SK-N-SH (cell line): ENCODE measurements at regions of chr5 and their contacts with region 1.

Region 1: GRCh38 chr5:114449860-114450421 is 88.1 kb downstream of the KCNN2 start:
- DNase-seq: peak; percentile 74
- H3K4me3 ChIP-seq: peak overlapping the region in 1 of 2 experiments; percentile 46; a peak in 1 of 4 replicates
- H3K27ac ChIP-seq: no peak overlapping the region
- H3K4me1 ChIP-seq: peaks cover 0 to 4% of the 10 kb centered on the region in 2 experiments; a peak in 1 of 4 replicates
- H3K27me3 ChIP-seq: no peaks in the 10 kb centered on the region
- CTCF ChIP-seq: peak; percentile 84
- EP300 ChIP-seq: no peak
- RAD21 ChIP-seq: peak; percentile 88

Region 2: GRCh38 chr5:113612060-113612496 is 837.9 kb before region 1 on chr5:
- CTCF ChIA-PET with region 1: interaction called, 60 read pairs
- POLR2A ChIA-PET with region 1: no interaction called
- DNase-seq: peak; percentile 53
- H3K4me3 ChIP-seq: no peak overlapping the region; a peak in 1 of 4 replicates
- H3K27ac ChIP-seq: no peak overlapping the region
- H3K4me1 ChIP-seq: peaks cover 0 to 2% of the 10 kb centered on the region in 2 experiments; a peak in 1 of 4 replicates
- H3K27me3 ChIP-seq: no peaks in the 10 kb centered on the region
- CTCF ChIP-seq: peak; percentile 70
- EP300 ChIP-seq: no peak
- RAD21 ChIP-seq: peak; percentile 83

Region 3: DNA sequence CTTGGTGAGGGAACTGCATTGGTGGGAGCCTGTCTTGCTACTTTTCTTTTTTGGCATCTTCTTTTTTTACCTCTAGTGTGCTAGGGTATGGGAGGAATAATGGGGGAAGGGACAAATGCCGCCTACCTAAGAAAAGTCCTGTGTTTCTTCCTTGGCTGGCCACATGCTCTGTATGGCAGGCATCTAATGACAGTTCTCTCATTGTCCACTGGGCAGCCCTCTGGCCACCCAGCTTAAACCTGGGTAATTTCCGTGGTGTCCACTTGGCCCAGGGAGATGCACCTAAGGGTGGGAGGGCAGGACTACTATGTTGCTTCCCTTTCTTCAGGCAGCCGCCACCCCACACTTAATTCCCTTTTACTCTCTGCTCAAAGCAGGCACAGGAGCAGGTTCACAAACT is 763.3 kb before region 1 on chr5:
- CTCF ChIA-PET with region 1: interaction called, 69 read pairs
- POLR2A ChIA-PET with region 1: no interaction called
- DNase-seq: no peak
- H3K4me3 ChIP-seq: no peak overlapping the region
- H3K27ac ChIP-seq: no peak overlapping the region
- H3K4me1 ChIP-seq: no peaks in the 10 kb centered on the region
- H3K27me3 ChIP-seq: no peaks in the 10 kb centered on the region; the same call in 1 of the 2 replicates
- CTCF ChIP-seq: no peak
- EP300 ChIP-seq: no peak
- RAD21 ChIP-seq: no peak

Region 4: DNA sequence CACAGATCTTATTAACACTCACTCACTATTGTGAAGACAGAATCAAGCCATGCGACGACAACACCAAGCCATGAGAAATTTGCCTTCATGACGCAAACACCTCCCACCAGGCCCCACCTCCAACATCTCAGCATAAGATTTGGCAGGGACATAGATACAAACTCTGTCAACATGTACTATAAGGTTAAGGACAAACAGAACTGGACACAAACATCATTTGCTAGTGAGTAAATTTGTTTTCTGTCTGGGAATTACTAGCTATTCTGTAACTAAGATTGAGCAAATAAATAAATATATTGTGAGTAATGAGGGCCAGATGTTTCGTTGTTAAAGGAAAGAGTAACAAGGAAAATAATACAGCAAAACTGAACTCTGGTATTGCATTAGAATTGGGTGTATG is 103.8 kb before region 1 on chr5:
- CTCF ChIA-PET with region 1: no interaction called
- POLR2A ChIA-PET with region 1: no interaction called
- DNase-seq: no peak
- H3K4me3 ChIP-seq: no peak overlapping the region
- H3K27ac ChIP-seq: no peak overlapping the region
- H3K4me1 ChIP-seq: no peaks in the 10 kb centered on the region
- H3K27me3 ChIP-seq: no peaks in the 10 kb centered on the region
- CTCF ChIP-seq: no peak
- EP300 ChIP-seq: no peak
- RAD21 ChIP-seq: no peak

Region 5: GRCh38 chr5:114418176-114419066 is 31.5 kb before region 1 on chr5:
- CTCF ChIA-PET with region 1: interaction called, 12 read pairs
- POLR2A ChIA-PET with region 1: no interaction called
- DNase-seq: no peak
- H3K4me3 ChIP-seq: no peak overlapping the region
- H3K27ac ChIP-seq: no peak overlapping the region
- H3K4me1 ChIP-seq: no peaks in the 10 kb centered on the region
- H3K27me3 ChIP-seq: no peaks in the 10 kb centered on the region
- CTCF ChIP-seq: no peak
- EP300 ChIP-seq: no peak
- RAD21 ChIP-seq: no peak

Region 6: GRCh38 chr5:115069087-115069968 is 619.4 kb after region 1 on chr5:
- CTCF ChIA-PET with region 1: interaction called, 13 read pairs
- POLR2A ChIA-PET with region 1: no interaction called
- DNase-seq: peak; percentile 7
- H3K4me3 ChIP-seq: peak overlapping the region in 1 of 2 experiments; percentile 33; a peak in 1 of 4 replicates
- H3K27ac ChIP-seq: no peak overlapping the region
- H3K4me1 ChIP-seq: no peaks in the 10 kb centered on the region
- H3K27me3 ChIP-seq: no peaks in the 10 kb centered on the region; the same call in 1 of the 2 replicates
- CTCF ChIP-seq: peak; percentile 78
- EP300 ChIP-seq: no peak
- RAD21 ChIP-seq: peak; percentile 76